ENCODE measurements at regions of chr14 and their contacts with region 1.

Region 1: GRCh38 chr14:77991128-77991772 is 178.9 kb upstream of the NRXN3 start:
- DNase-seq: no peak
- H3K4me3 ChIP-seq: no peak overlapping the region
- H3K27ac ChIP-seq: no peak overlapping the region
- H3K4me1 ChIP-seq: no peaks in the 10 kb centered on the region
- H3K27me3 ChIP-seq: no peaks in the 10 kb centered on the region
- CTCF ChIP-seq: no peak
- EP300 ChIP-seq: no peak
- POLR2A ChIP-seq: no peak

Region 2: DNA sequence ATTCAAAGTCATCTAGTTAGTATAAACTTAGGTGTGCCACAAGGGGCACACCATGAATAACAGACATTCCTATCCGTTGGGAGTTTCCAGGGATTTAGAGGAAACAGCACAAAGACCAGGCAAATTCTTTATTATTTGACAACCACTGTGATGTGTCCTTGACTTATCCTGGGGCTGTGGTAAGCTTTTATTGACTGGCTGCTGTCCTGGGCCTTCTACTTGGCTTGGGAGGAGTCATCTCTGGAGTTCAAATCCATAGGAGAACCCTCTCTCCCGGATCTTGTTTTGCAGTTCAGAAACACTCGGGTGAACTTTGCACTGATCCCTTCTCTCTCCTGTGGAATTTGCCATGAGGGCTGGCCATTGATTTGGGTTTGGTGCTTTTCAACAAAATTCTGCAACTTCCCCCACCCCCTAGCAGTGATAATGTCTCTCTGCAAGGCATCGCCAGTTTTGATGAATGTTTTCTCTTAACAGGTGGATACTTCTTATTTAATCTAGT is 55.1 kb before region 1 on chr14:
- intact Hi-C with region 1: no loop called
- DNase-seq: no peak
- H3K4me3 ChIP-seq: no peak overlapping the region
- H3K27ac ChIP-seq: no peak overlapping the region
- H3K4me1 ChIP-seq: no peaks in the 10 kb centered on the region
- H3K27me3 ChIP-seq: no peaks in the 10 kb centered on the region
- CTCF ChIP-seq: no peak
- EP300 ChIP-seq: no peak
- POLR2A ChIP-seq: no peak

Region 3: DNA sequence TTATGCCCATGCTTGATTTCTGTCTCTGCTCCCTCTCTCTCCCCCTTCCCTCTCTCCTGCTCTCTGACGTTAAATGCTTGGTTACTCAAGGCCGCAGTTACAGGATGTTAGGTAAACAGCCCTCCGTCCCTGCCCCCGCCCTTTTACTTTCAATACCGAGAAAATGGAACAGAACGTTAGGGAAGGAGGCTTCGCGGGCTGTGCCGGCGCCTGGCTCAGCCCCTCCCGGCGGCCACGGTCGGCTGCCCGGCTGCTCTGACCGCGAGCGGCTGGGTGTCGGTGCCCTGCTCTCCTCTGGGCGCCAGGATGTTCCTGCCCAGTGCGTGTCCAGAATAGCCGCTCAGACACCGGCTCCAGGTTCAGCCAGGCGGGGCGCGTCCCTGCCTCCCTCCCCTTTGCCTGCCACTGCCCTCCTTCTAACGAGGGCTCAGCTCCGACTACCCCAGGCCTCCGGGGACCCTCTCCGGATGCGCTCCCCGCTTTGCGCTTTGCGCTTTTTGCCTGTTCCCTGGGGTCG is 25.3 kb before region 1 on chr14:
- intact Hi-C with region 1: no loop called
- DNase-seq: peak in 2 of 5 donors; percentile 40 to 43
- H3K4me3 ChIP-seq: no peak overlapping the region
- H3K27ac ChIP-seq: no peak overlapping the region
- H3K4me1 ChIP-seq: peaks cover 1% of the 10 kb centered on the region
- H3K27me3 ChIP-seq: no peaks in the 10 kb centered on the region
- CTCF ChIP-seq: no peak
- EP300 ChIP-seq: no peak
- POLR2A ChIP-seq: no peak

Region 4: GRCh38 chr14:78863143-78863542 is 871.9 kb after region 1 on chr14:
- intact Hi-C with region 1: loop called in 1 of 4 experiments (anchors 5 kb)
- DNase-seq: no peak
- H3K4me3 ChIP-seq: no peak overlapping the region
- H3K27ac ChIP-seq: no peak overlapping the region
- H3K4me1 ChIP-seq: no peaks in the 10 kb centered on the region
- H3K27me3 ChIP-seq: no peaks in the 10 kb centered on the region
- CTCF ChIP-seq: no peak
- EP300 ChIP-seq: no peak
- POLR2A ChIP-seq: no peak